Dorsolateral prefrontal cortex (tissue), 120 donors: ENCODE measurements at regions of chr5 and their contacts with region 1.

Region 1: GRCh38 chr5:154478224-154478565 is at the start of gene HAND1:
- DNase-seq: no peak
- H3K4me3 ChIP-seq: peak within 1 kb of the TSS in 51 of 59 donors; percentile 6 to 65 (median 35)
- H3K27ac ChIP-seq: no peak within 1 kb of the TSS
- H3K27me3 ChIP-seq: peaks cover 34 to 100% (median 100%) of the 10 kb centered on the region in 45 donors
- CTCF ChIP-seq: no peak
- total RNA-seq, gene HAND1: 0.29 to 0.56 (median 0.29) TPM in 3 of 120 experiments, not detected in the others

Region 2: GRCh38 chr5:154498591-154498990 is 20.4 kb after region 1 on chr5:
- intact Hi-C with region 1: loop called in 1 of 2 experiments (anchors 1 kb)
- DNase-seq: no peak
- H3K4me3 ChIP-seq: no peak overlapping the region
- H3K27ac ChIP-seq: no peak overlapping the region
- H3K27me3 ChIP-seq: peaks cover 0 to 53% (median 14%) of the 10 kb centered on the region in 45 donors
- CTCF ChIP-seq: no peak

Region 3: GRCh38 chr5:155799308-155799707 is 1321.1 kb after region 1 on chr5:
- intact Hi-C with region 1: no loop called
- DNase-seq: no peak
- H3K4me3 ChIP-seq: no peak overlapping the region
- H3K27ac ChIP-seq: no peak overlapping the region
- H3K27me3 ChIP-seq: no peaks in the 10 kb centered on the region
- CTCF ChIP-seq: no peak